Activated CD4-positive, alpha-beta T cell treated with anti-CD3 and anti-CD28 coated beads, Interleukin-2, amount 10 ng/mL, durations not matched to agents 24 days and 14 days (primary cell): ENCODE measurements at regions of chr22 and their contacts with region 1.

Region 1: DNA sequence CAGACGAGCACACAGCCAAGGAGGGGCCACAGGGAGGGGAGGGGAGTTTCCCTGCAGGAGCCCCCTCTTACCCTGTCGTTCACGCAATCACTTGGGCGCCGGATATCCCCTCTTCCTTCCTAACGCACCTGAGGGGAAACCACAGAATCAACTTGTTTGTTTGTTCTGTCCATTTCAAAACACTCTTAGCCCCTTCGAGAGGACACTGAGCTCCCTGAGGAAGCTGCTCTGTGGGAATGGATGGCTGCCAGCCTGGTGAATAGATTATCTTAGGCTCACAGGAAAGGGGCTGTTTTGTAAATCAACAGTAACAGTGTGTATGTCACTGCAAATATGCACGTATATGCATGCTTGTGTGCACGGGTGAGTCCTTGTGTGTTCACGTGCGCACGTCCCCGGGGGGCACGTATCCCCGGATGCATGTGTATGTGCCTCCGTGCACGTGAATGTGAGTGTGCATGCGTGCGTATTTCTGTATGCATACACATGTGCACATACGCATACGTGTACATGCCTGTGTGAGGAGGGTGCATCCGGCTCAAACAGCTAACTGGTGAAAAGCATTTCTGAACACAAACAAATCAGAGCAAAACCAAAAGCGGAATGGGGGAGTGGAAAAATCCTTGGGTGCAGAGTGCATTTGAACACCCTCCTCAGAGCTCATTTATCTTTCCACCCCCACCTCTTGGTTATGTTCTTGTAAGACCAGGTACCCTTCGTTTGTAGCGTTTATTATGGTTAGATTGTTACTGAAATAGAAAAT is 7.2 kb downstream of the ARSA start:
- DNase-seq: peak; percentile 92
- H3K4me3 Mint-ChIP-seq: peak overlapping the region; percentile 85
- H3K27ac Mint-ChIP-seq: peak overlapping the region; percentile 99
- H3K4me1 Mint-ChIP-seq: peaks cover 35% of the 10 kb centered on the region
- H3K27me3 Mint-ChIP-seq: no peaks in the 10 kb centered on the region

Region 2: GRCh38 chr22:50244420-50245213 is 376.2 kb before region 1 on chr22 and contains the start of gene TUBGCP6:
- intact Hi-C with region 1: loop called (anchors 2 kb)
- DNase-seq: peak; percentile 98
- H3K4me3 Mint-ChIP-seq: peak within 1 kb of the TSS; percentile 97
- H3K27ac Mint-ChIP-seq: peak within 1 kb of the TSS; percentile 100
- H3K4me1 Mint-ChIP-seq: peaks cover 22% of the 10 kb centered on the region
- H3K27me3 Mint-ChIP-seq: peaks cover 2% of the 10 kb centered on the region
- total RNA-seq, gene TUBGCP6: 51.1 and 51.7 TPM in 2 replicates

Region 3: DNA sequence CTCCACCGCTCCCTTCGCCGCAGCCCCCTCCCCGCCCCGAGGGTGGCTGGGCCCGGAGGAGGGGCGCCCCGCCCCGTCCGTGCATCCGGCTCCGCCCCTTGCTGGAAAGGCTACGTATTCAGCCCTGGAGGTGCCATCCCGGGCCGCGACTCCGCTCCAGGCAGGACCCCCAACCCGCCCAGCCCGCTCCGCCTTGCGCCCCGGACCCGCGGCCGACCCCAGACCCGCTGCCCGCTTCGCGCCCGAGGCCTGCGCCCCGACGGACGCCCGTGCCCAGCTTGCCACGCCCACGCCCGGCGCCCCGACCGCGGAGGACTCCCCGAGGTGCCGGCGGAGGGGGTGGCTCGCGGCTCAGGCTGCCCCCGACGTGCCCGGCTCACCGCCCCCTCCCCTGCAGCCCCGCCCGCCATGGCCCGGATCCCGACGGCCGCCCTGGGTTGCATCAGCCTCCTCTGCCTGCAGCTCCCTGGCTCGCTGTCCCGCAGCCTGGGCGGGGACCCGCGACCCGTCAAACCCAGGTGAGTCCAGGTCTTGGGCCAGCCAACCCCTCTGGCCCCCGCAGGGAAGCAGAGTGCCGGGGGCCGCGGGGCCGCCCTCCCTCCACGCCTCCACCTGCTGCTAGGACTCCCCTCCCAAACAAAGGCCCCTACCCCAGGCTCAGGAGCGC is 139.2 kb before region 1 on chr22 and contains the start of gene ADM2:
- intact Hi-C with region 1: no loop called
- DNase-seq: peak; percentile 94
- H3K4me3 Mint-ChIP-seq: peak within 1 kb of the TSS; percentile 80
- H3K27ac Mint-ChIP-seq: peak within 1 kb of the TSS; percentile 84
- H3K4me1 Mint-ChIP-seq: peaks cover 7% of the 10 kb centered on the region
- H3K27me3 Mint-ChIP-seq: peaks cover 19% of the 10 kb centered on the region
- total RNA-seq, gene ADM2: 3.0 and 3.2 TPM in 2 replicates

Region 4: DNA sequence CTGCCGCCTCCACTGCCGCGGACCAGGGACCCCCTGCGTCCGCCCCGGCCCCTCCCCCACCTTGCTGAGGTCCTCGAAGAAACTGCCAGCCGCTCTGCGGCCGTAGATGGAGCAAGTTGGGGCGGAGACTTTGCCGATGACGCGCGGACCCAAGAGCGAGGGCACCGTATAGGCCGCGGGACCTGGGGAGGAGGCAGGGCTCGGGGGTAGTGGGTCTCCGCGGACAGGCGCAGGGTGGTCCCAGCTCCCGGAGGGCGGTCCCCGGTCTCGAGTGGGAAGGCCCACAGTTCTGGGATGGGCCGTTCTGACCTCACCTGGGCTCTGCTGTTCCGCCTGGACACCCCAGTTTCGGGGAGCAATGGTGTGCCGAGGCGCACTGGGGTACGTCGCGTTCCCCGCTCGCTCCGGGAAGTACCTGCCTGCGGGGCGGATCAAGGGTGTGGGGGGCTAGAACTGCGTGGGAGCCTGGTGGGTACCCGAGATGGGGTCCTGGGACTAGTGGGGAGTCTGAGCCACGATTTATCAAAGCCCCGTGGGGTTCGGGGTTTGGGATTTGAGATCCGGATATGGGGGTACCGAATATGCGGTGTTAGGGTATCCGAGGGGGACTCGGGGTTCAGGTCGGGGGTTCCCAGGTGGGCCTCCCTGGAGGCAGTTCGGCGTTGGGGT is 89.8 kb before region 1 on chr22:
- intact Hi-C with region 1: loop called (anchors 1 kb)
- DNase-seq: peak; percentile 96
- H3K4me3 Mint-ChIP-seq: peak overlapping the region; percentile 96
- H3K27ac Mint-ChIP-seq: peak overlapping the region; percentile 100
- H3K4me1 Mint-ChIP-seq: peaks cover 47% of the 10 kb centered on the region
- H3K27me3 Mint-ChIP-seq: no peaks in the 10 kb centered on the region

Region 5: GRCh38 chr22:50544078-50544745 is 76.6 kb before region 1 on chr22:
- intact Hi-C with region 1: loop called (anchors 1 kb)
- DNase-seq: peak; percentile 95
- H3K4me3 Mint-ChIP-seq: peak overlapping the region; percentile 72
- H3K27ac Mint-ChIP-seq: peak overlapping the region; percentile 86
- H3K4me1 Mint-ChIP-seq: peaks cover 56% of the 10 kb centered on the region
- H3K27me3 Mint-ChIP-seq: no peaks in the 10 kb centered on the region

Region 6: DNA sequence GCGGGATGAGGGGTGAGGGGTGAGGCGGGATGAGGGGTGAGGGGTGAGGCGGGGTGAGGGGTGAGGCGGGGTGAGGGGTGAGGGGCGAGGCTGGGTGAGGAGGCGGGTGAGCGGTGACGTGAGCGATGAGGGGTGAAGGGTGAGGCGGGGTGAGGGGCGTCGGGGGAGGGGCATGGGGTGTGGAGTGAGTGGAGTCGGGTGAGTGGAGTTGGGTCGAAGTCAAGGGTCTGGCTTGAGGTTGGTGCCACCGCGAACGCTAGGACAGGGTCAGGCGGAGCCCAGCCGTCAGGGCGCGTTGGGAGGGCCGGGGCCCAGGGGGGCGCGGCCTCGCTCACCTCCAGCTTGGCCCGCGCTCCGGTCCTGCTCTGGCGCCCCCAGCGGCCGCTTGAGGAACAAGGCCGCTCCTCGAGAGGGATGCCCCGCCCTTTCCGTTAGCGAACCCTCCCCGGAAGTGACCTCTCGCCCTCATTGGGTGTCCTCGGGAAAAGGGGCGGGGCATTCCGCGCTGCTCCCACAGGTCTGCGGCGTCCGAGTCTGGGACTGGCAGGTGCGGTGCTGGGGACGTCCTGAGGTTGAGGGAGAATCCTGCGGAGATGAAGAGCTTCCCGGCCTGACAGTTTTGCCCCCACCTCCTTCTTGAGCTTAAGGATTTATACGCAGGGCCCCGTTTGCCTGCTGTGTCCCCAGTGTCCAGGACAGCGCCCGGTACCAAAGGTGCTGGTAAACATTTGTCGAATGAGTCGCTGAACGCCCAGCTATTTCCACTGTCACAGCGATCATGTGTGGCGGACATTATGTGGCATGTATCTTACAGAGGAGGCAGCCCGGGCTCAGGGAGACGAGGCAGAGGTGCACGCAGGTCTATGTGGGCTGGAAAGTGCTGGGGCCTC is 58.0 kb before region 1 on chr22 and contains the start of gene SYCE3:
- intact Hi-C with region 1: no loop called
- DNase-seq: peak; percentile 100
- H3K4me3 Mint-ChIP-seq: peak within 1 kb of the TSS; percentile 94
- H3K27ac Mint-ChIP-seq: peak within 1 kb of the TSS; percentile 85
- H3K4me1 Mint-ChIP-seq: peaks cover 21% of the 10 kb centered on the region
- H3K27me3 Mint-ChIP-seq: peaks cover 14% of the 10 kb centered on the region
- total RNA-seq, gene SYCE3: 0.69 TPM in 1 of 2 replicates, not detected in the other

Region 7: DNA sequence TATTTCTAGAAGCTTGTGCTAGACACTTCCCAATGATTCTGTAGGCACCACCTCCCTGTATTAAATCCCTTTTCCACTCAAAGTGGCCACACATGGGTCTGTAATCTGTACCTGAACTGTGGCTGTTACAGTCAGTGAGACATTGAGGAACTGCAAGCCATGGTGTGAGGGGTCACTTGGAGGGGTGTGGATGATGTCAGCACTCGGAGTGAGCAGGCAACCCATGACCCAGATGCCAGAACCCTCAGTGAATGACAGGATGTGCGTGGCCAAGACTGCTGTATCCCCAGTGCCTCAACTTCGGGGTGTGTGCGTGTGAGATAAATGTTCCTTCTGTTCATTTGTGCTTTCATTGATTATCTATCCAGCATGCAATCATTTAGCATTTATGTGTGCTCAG is 37.2 kb after region 1 on chr22:
- intact Hi-C with region 1: no loop called
- DNase-seq: no peak
- H3K4me3 Mint-ChIP-seq: no peak overlapping the region
- H3K27ac Mint-ChIP-seq: no peak overlapping the region
- H3K4me1 Mint-ChIP-seq: peaks cover 2% of the 10 kb centered on the region
- H3K27me3 Mint-ChIP-seq: peaks cover 8% of the 10 kb centered on the region